HCT116 (cell line): ENCODE measurements at regions of chr16 and their contacts with region 1.

Region 1: DNA sequence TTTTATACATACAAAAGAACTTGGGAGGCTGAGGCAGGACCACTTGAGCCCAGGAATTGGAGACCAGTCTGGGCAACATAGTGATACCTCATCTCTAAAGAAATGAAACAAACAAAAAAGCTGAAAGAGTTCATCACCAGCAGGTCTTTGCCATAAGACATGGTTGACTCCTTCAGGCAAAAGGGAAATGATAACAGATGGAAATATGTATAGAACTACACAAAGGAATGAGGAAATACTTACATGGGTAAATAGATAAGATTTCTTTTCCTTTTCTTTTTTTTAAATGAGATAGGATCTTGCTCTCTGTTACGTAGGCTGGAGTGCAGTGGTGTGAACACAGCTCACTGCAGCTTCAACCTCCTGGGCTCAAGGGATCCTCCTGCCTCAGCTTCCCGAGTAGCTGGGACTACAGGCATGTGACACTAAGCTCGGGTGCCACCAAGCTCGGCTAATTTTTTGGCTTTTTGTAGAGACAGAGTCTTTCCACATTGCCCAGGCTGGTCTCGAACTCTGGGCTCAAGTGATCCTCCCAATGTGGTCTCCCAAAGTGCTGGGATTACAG is 165.2 kb downstream of the PARN start:
- DNase-seq: no peak
- ATAC-seq: no peak
- H3K4me3 ChIP-seq: no peak overlapping the region
- H3K27ac ChIP-seq: no peak overlapping the region
- H3K4me1 ChIP-seq: no peaks in the 10 kb centered on the region
- H3K27me3 ChIP-seq: no peaks in the 10 kb centered on the region
- CTCF ChIP-seq: no peak
- POLR2A ChIP-seq: no peak
- RAD21 ChIP-seq: no peak

Region 2: DNA sequence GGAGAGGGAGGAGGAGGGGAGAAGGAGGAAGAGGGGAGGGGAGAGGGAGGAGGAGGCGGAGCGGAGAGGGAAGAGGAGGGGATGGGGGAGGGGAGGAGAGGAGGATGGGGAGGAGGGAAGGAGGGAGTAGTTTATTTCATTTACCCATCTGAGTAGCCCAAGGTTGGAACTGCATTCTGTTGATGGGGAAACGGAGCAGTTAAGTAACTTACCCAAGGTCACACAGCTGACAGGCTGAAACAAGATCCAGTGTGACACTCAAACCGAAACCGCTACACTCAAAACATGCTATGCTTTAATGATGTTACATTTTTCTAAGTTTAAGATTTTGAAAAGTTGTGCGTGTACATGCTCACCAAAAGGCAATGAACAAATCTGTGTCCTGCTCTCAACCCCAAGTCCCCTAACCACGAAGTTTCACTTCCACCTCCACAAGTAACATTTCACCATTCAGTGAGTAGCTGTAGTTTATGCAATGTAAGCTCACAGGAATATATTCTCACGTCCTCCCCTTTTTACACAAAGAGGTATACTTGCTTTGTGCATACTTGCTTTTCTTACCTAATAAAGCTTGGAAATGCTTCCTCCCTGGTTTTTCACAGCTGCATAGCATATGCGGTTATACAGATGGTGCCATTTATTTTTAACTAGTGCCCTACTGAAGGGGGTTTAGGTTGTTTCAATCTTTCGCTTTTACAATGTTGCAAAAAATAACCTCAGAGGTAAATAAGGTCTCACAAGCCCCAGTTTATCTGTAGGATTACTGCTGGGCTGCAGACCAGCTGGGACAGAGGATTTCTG is 110.1 kb before region 1 on chr16:
- CTCF ChIA-PET with region 1: no interaction called
- POLR2A ChIA-PET with region 1: no interaction called
- RAD21 ChIA-PET with region 1: no interaction called
- intact Hi-C with region 1: no loop called
- DNase-seq: no peak
- ATAC-seq: peak; percentile 37
- H3K4me3 ChIP-seq: no peak overlapping the region
- H3K27ac ChIP-seq: no peak overlapping the region
- H3K4me1 ChIP-seq: peaks cover 0 to 9% of the 10 kb centered on the region in 2 experiments; a peak in 3 of 4 replicates
- H3K27me3 ChIP-seq: no peaks in the 10 kb centered on the region
- CTCF ChIP-seq: no peak
- POLR2A ChIP-seq: no peak
- RAD21 ChIP-seq: no peak

Region 3: DNA sequence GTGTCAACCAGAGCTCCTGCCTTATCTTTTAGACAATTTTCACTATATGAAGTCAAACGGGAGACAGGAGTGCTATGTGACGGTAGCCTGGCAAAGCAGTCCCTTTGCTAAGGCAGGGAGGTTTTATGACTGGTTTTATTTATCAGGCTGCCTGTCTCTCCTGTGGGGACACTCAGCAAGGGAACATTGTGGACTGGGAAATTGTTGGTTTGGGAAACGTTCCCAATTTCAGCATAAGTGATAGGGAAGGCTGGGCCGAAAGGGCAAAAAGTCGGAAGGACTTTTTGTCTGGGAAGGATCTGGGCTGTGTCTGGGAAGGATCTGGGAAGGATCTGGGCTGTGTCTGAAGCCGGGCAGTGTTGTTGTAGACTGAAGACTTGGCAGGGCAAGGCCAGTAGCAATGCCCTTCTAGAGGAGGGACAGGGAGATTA is 46.1 kb before region 1 on chr16:
- CTCF ChIA-PET with region 1: no interaction called
- POLR2A ChIA-PET with region 1: no interaction called
- RAD21 ChIA-PET with region 1: no interaction called
- intact Hi-C with region 1: loop called (anchors 5 kb)
- DNase-seq: no peak
- ATAC-seq: no peak
- H3K4me3 ChIP-seq: no peak overlapping the region
- H3K27ac ChIP-seq: no peak overlapping the region
- H3K4me1 ChIP-seq: peaks cover 6 to 11% of the 10 kb centered on the region in 2 experiments
- H3K27me3 ChIP-seq: no peaks in the 10 kb centered on the region
- CTCF ChIP-seq: no peak
- POLR2A ChIP-seq: no peak
- RAD21 ChIP-seq: no peak

Region 4: DNA sequence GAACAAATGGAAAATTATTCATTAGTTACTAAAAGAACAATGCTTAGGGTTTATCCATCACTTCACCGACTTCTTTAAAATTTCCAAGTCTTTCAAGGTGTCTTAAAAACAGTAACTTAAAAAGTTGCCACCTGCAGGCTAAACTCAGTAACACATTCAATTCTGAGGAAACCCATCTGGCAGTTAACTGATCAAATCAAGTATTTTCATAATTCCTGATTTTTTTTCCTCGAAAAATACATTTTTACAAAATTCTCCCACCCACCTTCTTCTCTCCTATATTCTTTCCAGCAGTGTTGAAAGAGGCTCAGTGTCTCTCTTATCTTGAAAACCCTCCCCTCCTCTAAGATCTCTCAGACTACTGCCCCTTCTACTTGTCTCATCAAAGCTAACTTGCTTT is 135.3 kb after region 1 on chr16:
- CTCF ChIA-PET with region 1: no interaction called
- POLR2A ChIA-PET with region 1: no interaction called
- RAD21 ChIA-PET with region 1: no interaction called
- intact Hi-C with region 1: no loop called
- DNase-seq: peak; percentile 10
- ATAC-seq: peak; percentile 61; the same call in 1 of the 2 replicates
- H3K4me3 ChIP-seq: no peak overlapping the region
- H3K27ac ChIP-seq: no peak overlapping the region
- H3K4me1 ChIP-seq: no peaks in the 10 kb centered on the region
- H3K27me3 ChIP-seq: no peaks in the 10 kb centered on the region
- CTCF ChIP-seq: peak; percentile 23 to 59 (median 45); a peak in 5 of 6 replicates
- POLR2A ChIP-seq: no peak
- RAD21 ChIP-seq: no peak